H1 (cell line): ENCODE measurements at regions of chr12 and their contacts with region 1.

Region 1: DNA sequence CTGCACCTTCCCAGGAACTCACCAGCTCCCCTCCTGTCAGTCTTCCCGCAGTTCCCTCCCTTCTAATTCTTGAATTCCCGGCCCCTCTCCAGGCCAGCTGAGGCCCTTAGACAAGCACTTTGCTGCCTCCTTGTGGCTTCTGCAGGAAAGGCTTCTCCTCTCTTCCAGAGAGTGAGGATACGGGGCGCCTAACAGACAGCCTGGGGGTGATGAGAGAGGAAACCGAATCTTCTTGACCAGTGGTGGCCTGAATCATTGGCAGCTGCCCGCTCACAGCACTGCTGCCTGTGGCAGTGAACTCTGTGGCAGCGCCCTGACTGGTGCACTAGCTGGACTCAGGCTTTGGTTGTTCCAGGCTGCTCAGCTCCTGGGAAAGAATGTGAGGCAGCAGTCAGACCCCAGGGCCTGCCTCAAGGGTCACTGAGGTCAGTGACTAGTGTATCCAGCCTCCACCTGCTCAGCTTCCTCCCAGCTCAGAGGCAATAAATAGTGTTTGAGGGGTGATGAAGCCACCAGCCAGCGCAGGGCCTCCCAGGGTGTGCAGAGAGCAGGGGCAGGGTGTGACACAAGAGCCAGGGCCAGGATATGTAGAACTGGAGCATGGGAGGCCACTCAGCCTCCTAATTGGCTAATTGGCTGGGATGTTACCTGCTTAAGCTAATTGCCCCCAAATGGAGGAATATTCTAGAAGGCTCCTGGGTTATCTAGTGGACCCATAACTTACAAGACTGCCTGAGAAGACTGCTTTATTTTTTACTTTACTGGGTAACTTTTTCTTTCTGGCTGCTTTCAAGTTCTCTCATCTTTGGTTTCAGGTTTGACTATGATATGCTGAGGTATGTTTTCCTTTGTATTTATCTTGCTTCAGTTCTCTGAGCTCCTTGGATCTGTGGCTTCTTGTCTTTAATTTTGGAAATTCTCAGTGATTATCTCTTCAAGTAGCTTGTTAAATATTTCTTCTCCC is 12.9 kb upstream of the MCRS1 start:
- DNase-seq: peak; percentile 77 to 92
- H3K4me3 ChIP-seq: no peak overlapping the region
- H3K27ac ChIP-seq: no peak overlapping the region
- H3K4me1 ChIP-seq: peaks cover 0 to 6% (median 4%) of the 10 kb centered on the region in 4 experiments; a peak in 4 of 7 replicates
- H3K27me3 ChIP-seq: no peaks in the 10 kb centered on the region
- CTCF ChIP-seq: peak; percentile 74 to 97 (median 94)
- EP300 ChIP-seq: no peak
- POLR2A ChIP-seq: no peak
- RAD21 ChIP-seq: peak; percentile 88

Region 2: GRCh38 chr12:49366652-49367380 is 214.0 kb before region 1 on chr12:
- CTCF ChIA-PET with region 1: interaction called, 10 read pairs
- POLR2A ChIA-PET with region 1: no interaction called
- DNase-seq: peak; percentile 86 to 94
- H3K4me3 ChIP-seq: peak overlapping the region; percentile 80 to 95 (median 86)
- H3K27ac ChIP-seq: peak overlapping the region; percentile 90
- H3K4me1 ChIP-seq: peaks cover 0 to 8% (median 2%) of the 10 kb centered on the region in 4 experiments; a peak in 3 of 7 replicates
- H3K27me3 ChIP-seq: peaks cover 0 to 3% (median 0%) of the 10 kb centered on the region in 4 experiments; a peak in 3 of 7 replicates
- CTCF ChIP-seq: peak in 2 of 3 experiments; percentile 2 to 15; a peak in 2 of 4 replicates
- EP300 ChIP-seq: no peak
- POLR2A ChIP-seq: peak; percentile 70 to 91
- RAD21 ChIP-seq: 0 out of 4 replicates have a peak, but pooled peaks of 1 of the 2 experiments have one; percentile 5

Region 3: DNA sequence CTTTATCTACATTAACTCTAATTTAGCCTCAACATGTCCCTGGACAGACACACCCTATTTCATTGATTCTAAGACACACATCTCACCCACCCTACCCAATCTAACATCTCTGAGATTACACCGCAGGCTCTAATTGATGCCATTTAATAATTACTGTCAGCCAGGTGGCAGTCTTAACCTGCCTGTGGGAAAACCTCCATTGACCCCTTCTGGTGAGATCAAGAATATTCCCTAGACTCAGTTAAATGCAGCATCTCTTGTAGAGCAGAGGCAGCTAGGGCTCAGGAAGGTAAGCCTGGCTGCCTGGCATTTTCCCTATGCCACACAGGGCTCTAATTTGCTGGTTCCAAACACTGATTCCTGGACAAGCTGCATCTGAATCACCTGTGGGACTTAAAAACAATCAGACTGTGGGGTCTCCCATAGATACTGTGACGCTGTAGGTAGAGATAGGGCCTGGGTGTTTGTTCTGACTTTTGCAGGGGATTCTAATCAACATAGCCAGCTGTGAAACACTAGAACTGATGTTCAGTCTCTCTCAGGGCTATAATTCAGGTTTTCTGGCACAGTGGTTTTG is 27.3 kb before region 1 on chr12:
- CTCF ChIA-PET with region 1: interaction called, 171 read pairs
- POLR2A ChIA-PET with region 1: interaction called, 11 read pairs
- DNase-seq: no peak
- H3K4me3 ChIP-seq: no peak overlapping the region
- H3K27ac ChIP-seq: no peak overlapping the region
- H3K4me1 ChIP-seq: peaks cover 0 to 12% (median 8%) of the 10 kb centered on the region in 4 experiments; a peak in 6 of 7 replicates
- H3K27me3 ChIP-seq: peaks cover 4 to 28% (median 20%) of the 10 kb centered on the region in 4 experiments
- CTCF ChIP-seq: peak in 2 of 3 experiments; percentile 82 to 99; a peak in 3 of 4 replicates
- EP300 ChIP-seq: no peak
- POLR2A ChIP-seq: no peak
- RAD21 ChIP-seq: peak; percentile 75 to 85

Region 4: GRCh38 chr12:49609746-49610089 is 28.9 kb after region 1 on chr12:
- CTCF ChIA-PET with region 1: interaction called, 15 read pairs
- POLR2A ChIA-PET with region 1: no interaction called
- DNase-seq: no peak
- H3K4me3 ChIP-seq: no peak overlapping the region
- H3K27ac ChIP-seq: no peak overlapping the region
- H3K4me1 ChIP-seq: no peaks in the 10 kb centered on the region
- H3K27me3 ChIP-seq: no peaks in the 10 kb centered on the region; a peak in 2 of 7 replicates
- CTCF ChIP-seq: peak in 1 of 3 experiments; percentile 29; a peak in 1 of 4 replicates
- EP300 ChIP-seq: no peak
- POLR2A ChIP-seq: no peak
- RAD21 ChIP-seq: 0 out of 4 replicates have a peak, but pooled peaks of 1 of the 2 experiments have one; percentile 2

Region 5: GRCh38 chr12:49623142-49623904 is 42.5 kb after region 1 on chr12 and contains the start of gene PRPF40B:
- CTCF ChIA-PET with region 1: interaction called, 15 read pairs
- POLR2A ChIA-PET with region 1: interaction called, 3 read pairs
- DNase-seq: peak; percentile 78 to 95
- H3K4me3 ChIP-seq: peak within 1 kb of the TSS; percentile 50 to 73 (median 66)
- H3K27ac ChIP-seq: peak within 1 kb of the TSS; percentile 56; the same call in 1 of the 2 replicates
- H3K4me1 ChIP-seq: peaks cover 0 to 7% (median 3%) of the 10 kb centered on the region in 4 experiments; a peak in 6 of 7 replicates
- H3K27me3 ChIP-seq: no peaks in the 10 kb centered on the region
- CTCF ChIP-seq: peak; percentile 47 to 56 (median 54)
- EP300 ChIP-seq: 0 out of 3 replicates have a peak, but pooled peaks of 1 of the 2 experiments have one; percentile 7
- POLR2A ChIP-seq: no peak; a peak in 1 of 3 replicates
- RAD21 ChIP-seq: peak; percentile 27 to 47; a peak in 3 of 4 replicates
- total RNA-seq, gene PRPF40B: 24.4 and 26.8 TPM in 2 replicates